Activated T-helper 2 cell treated with anti-CD3 and anti-CD28 coated beads, Interferon-gamma antibody, Interleukin-2, Interleukin-4, amounts not matched to agents 10 μg/mL and 5 μg/mL and 100 μg/mL, durations not matched to agents 14 hours and 24 hours and 36 hours (primary cell): ENCODE measurements at regions of chr3 and their contacts with region 1.

Region 1: DNA sequence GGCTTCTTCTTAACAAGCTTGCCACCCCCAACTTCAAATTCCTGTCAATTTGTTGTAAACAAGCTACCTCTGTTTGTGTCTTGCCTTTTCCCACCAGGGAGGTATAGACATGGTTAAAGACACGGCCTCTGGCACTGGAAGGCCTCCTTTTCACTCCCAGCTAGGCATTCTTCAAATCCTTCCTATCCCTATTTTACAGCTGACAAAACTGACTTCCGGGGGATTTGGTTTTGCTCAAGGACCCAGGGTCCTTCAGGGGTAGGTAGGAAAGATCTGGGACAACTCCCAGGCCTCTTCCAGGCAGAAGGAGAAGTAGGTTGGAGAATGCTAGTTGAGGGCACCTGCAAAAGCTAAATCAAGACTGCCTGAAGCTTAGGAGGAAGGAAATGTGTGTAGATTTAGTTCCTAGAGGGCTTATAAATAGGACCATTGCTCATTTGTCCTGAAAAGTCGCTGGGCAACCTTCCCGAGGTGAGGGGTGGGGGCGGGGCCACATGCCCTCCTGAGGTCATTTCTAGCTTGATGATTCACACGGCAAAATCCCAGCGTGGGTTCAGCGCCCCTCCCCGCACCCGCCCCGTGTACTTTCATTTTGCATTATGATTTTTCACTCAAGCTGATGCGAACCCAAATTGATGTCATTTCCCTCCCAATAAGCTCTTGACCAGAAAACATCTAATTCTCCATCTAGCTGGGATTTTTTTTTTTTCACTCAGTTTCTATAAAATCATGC is 365.5 kb downstream of the SHQ1 start:
- DNase-seq: peak; percentile 63
- H3K4me3 Mint-ChIP-seq: peak overlapping the region; percentile 61
- H3K27ac Mint-ChIP-seq: peak overlapping the region; percentile 90
- H3K4me1 Mint-ChIP-seq: peaks cover 76% of the 10 kb centered on the region
- H3K27me3 Mint-ChIP-seq: no peaks in the 10 kb centered on the region

Region 2: DNA sequence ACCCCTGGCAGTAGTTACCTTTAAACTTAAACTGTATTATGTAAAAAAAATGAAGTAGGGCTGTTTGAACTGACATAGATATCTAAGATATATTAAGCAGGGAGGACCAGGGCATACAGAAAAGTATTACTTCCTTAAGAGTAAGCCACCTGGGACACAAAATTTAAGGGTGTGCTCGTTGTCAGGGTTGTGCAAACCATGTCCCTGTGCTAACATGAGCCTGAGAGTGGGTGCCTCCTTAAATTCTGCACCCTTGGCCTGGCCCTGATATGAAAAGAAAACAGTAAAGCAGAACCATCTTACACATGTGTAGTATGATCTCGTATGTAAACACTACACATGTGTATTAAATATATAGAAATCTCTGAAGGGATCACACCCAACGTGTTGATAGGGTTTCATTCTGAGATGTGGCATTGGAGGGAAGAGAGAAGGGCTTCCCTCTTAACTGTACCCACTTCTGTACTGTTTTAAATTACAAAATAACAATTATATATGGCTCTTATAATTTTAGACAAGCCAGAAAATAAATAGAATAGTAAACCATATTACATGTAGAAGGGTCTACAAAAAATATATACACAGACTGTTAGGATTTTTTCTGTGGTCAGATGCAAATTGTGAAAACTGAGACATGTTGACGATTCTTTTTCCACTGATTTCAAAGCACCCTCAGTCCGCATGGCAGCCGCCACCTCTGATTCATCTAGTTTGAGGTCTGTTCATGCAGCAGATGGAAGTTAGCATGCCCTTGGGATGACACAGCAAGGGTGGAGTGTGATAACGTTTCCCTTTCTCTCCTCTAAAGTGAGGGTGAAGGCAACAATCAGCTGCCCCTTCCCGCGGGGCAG is 297.0 kb before region 1 on chr3:
- intact Hi-C with region 1: no loop called
- DNase-seq: no peak
- H3K4me3 Mint-ChIP-seq: no peak overlapping the region
- H3K27ac Mint-ChIP-seq: no peak overlapping the region
- H3K4me1 Mint-ChIP-seq: peaks cover 12% of the 10 kb centered on the region
- H3K27me3 Mint-ChIP-seq: peaks cover 16% of the 10 kb centered on the region

Region 3: GRCh38 chr3:72339116-72340030 is 143.4 kb before region 1 on chr3:
- intact Hi-C with region 1: loop called (anchors 1 kb)
- DNase-seq: no peak
- H3K4me3 Mint-ChIP-seq: no peak overlapping the region
- H3K27ac Mint-ChIP-seq: no peak overlapping the region
- H3K4me1 Mint-ChIP-seq: peaks cover 29% of the 10 kb centered on the region
- H3K27me3 Mint-ChIP-seq: no peaks in the 10 kb centered on the region

Region 4: GRCh38 chr3:72375237-72376076 is 107.3 kb before region 1 on chr3:
- intact Hi-C with region 1: loop called (anchors 1 kb)
- DNase-seq: no peak
- H3K4me3 Mint-ChIP-seq: peak overlapping the region; percentile 54
- H3K27ac Mint-ChIP-seq: peak overlapping the region; percentile 86
- H3K4me1 Mint-ChIP-seq: peaks cover 61% of the 10 kb centered on the region
- H3K27me3 Mint-ChIP-seq: no peaks in the 10 kb centered on the region

Region 5: GRCh38 chr3:72447059-72447946 is 35.5 kb before region 1 on chr3:
- intact Hi-C with region 1: loop called (anchors 1 kb)
- DNase-seq: peak; percentile 92
- H3K4me3 Mint-ChIP-seq: peak overlapping the region; percentile 66
- H3K27ac Mint-ChIP-seq: peak overlapping the region; percentile 60
- H3K4me1 Mint-ChIP-seq: peaks cover 52% of the 10 kb centered on the region
- H3K27me3 Mint-ChIP-seq: no peaks in the 10 kb centered on the region

Region 6: GRCh38 chr3:72458358-72458757 is 24.4 kb before region 1 on chr3:
- intact Hi-C with region 1: loop called (anchors 2 kb)
- DNase-seq: no peak
- H3K4me3 Mint-ChIP-seq: no peak overlapping the region
- H3K27ac Mint-ChIP-seq: no peak overlapping the region
- H3K4me1 Mint-ChIP-seq: peaks cover 28% of the 10 kb centered on the region
- H3K27me3 Mint-ChIP-seq: no peaks in the 10 kb centered on the region

Region 7: GRCh38 chr3:72523429-72524151 is 40.8 kb after region 1 on chr3:
- intact Hi-C with region 1: loop called (anchors 1 kb)
- DNase-seq: no peak
- H3K4me3 Mint-ChIP-seq: no peak overlapping the region
- H3K27ac Mint-ChIP-seq: peak overlapping the region; percentile 51
- H3K4me1 Mint-ChIP-seq: peaks cover 44% of the 10 kb centered on the region
- H3K27me3 Mint-ChIP-seq: no peaks in the 10 kb centered on the region

Region 8: DNA sequence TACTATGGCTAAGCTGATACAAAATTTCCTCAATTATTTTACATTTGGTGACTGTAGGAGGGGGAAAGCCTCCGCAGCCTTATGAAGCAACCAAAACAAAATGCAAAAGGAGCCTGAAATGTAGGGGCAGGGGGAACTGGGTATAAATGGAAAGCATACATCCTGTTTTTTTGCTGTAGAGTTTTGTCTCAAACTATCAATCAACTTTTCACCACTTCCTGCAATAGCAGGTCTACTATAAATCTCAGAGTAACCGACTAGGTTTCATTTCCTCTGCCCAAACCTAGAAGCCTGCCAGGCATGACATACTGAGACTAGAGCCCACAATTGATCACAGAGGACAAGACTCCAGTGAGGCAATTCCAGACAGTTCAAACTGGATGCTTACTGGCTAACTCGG is 274.1 kb after region 1 on chr3:
- intact Hi-C with region 1: loop called (anchors 10 kb)
- DNase-seq: peak; percentile 53
- H3K4me3 Mint-ChIP-seq: no peak overlapping the region
- H3K27ac Mint-ChIP-seq: peak overlapping the region; percentile 45
- H3K4me1 Mint-ChIP-seq: peaks cover 34% of the 10 kb centered on the region
- H3K27me3 Mint-ChIP-seq: no peaks in the 10 kb centered on the region

Region 9: DNA sequence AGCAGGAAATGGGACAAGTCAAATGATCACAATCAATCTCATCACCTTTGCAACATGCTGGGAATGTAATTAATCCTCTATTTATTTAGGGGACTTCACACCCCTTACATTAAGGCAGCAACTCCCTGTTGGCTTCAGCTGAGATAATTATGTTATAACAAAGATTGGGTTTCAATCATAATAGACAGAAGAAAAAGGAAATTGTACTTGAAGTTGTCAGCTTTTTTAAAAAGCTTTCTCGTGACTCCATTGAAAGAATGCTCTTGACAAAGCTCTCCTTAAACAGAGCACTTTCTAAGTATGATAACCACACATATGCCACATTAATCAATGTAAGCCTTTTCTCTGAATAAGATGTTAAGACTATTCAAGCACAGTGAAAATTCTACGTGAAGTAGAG is 299.8 kb after region 1 on chr3:
- intact Hi-C with region 1: no loop called
- DNase-seq: no peak
- H3K4me3 Mint-ChIP-seq: no peak overlapping the region
- H3K27ac Mint-ChIP-seq: no peak overlapping the region
- H3K4me1 Mint-ChIP-seq: no peaks in the 10 kb centered on the region
- H3K27me3 Mint-ChIP-seq: no peaks in the 10 kb centered on the region